ENCODE measurements at regions of chr14 and their contacts with region 1.

Region 1: DNA sequence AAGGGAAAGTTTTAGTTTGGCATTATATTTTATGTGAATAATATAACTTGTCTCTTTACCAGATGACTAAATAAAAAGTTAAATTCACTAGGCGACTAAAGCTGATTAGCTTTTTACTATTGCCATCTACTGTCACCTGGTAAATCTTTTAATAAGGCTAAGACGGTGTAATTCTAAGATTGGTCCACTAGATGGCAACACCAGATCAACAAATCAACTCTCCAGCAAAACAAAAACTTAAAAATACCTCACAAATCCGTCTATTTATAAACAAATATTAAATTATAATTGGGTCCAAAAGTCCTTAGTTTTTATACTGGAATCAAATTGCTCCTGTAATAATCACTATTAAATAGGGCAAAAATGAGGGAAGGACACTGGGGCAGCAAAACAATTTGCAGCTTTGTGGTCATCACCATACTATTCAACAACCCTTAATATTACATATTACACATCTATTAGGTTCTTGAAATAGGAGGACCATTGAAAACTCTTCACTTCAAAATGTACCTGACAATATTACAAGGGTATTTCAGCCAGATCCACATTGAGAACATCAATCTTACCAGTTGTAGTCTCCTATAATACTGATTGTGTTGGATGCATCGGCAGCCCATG is 47.9 kb downstream of the GALC start:
- DNase-seq: peak; percentile 68
- ATAC-seq: peak; percentile 88
- H3K4me3 ChIP-seq: no peak overlapping the region
- H3K27ac ChIP-seq: no peak overlapping the region
- H3K4me1 ChIP-seq: no peaks in the 10 kb centered on the region
- H3K27me3 ChIP-seq: no peaks in the 10 kb centered on the region
- CTCF ChIP-seq: peak; percentile 69
- POLR2A ChIP-seq: no peak
- RAD21 ChIP-seq: peak; percentile 64

Region 2: GRCh38 chr14:88013750-88014349 is 68.8 kb after region 1 on chr14:
- CTCF ChIA-PET with region 1: interaction called, 4 read pairs
- POLR2A ChIA-PET with region 1: no interaction called
- dilution Hi-C with region 1: no loop called
- in situ Hi-C with region 1: no loop called
- intact Hi-C with region 1: loop called (anchors 5 kb)
- DNase-seq: peak; percentile 58
- ATAC-seq: peak; percentile 94
- H3K4me3 ChIP-seq: no peak overlapping the region
- H3K27ac ChIP-seq: no peak overlapping the region
- H3K4me1 ChIP-seq: no peaks in the 10 kb centered on the region
- H3K27me3 ChIP-seq: no peaks in the 10 kb centered on the region; the same call in 1 of the 2 replicates
- CTCF ChIP-seq: peak; percentile 87
- POLR2A ChIP-seq: no peak
- RAD21 ChIP-seq: peak; percentile 78

Region 3: GRCh38 chr14:88179716-88180115 is 234.6 kb after region 1 on chr14:
- CTCF ChIA-PET with region 1: interaction called, 4 read pairs
- POLR2A ChIA-PET with region 1: no interaction called
- dilution Hi-C with region 1: no loop called
- in situ Hi-C with region 1: loop called (anchors 10 kb)
- intact Hi-C with region 1: no loop called
- DNase-seq: no peak
- ATAC-seq: no peak
- H3K4me3 ChIP-seq: no peak overlapping the region
- H3K27ac ChIP-seq: no peak overlapping the region
- H3K4me1 ChIP-seq: no peaks in the 10 kb centered on the region
- H3K27me3 ChIP-seq: no peaks in the 10 kb centered on the region
- CTCF ChIP-seq: no peak
- POLR2A ChIP-seq: no peak
- RAD21 ChIP-seq: no peak

Region 4: DNA sequence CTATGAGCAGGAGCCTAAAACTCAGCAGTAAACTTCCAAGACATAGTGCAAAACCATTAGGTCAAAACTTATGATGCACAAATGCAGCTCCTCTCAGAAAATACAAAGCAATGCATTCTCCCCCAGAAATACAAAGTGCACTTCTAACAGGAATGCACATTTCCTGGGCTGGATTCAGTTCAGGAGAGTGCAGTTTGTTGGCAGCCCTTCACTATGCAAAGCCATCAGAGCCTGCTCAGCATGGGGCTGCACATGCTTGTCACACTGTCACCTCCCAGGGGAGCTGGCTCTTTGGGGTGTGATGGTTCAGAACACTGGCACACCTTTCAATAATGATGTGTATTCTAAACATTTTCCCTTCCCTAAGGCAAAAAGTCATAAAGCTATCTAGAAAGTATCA is 267.6 kb after region 1 on chr14:
- CTCF ChIA-PET with region 1: no interaction called
- POLR2A ChIA-PET with region 1: no interaction called
- dilution Hi-C with region 1: no loop called
- in situ Hi-C with region 1: no loop called
- intact Hi-C with region 1: no loop called
- DNase-seq: no peak
- ATAC-seq: no peak
- H3K4me3 ChIP-seq: no peak overlapping the region
- H3K27ac ChIP-seq: no peak overlapping the region
- H3K4me1 ChIP-seq: no peaks in the 10 kb centered on the region
- H3K27me3 ChIP-seq: no peaks in the 10 kb centered on the region
- CTCF ChIP-seq: no peak
- POLR2A ChIP-seq: no peak
- RAD21 ChIP-seq: no peak

Region 5: DNA sequence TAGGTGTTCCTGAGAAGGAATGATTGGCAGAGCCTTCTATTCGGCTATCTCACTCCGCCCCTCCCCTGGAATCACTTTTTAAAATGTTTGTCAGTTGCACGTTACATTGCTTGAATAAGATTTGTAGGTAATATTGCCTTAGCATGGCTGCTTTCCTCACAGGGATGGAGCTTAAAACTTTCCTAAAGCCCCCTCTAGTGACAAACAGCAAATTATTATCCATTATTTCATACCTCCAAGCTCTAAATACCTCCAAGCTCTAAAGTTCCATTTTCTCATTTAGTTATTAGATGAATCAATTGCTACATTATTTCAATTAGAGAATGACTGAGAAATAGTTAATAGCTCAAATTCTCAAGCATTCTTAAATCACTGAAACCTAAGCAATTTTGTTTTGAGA is 435.3 kb after region 1 on chr14:
- CTCF ChIA-PET with region 1: no interaction called
- POLR2A ChIA-PET with region 1: no interaction called
- dilution Hi-C with region 1: no loop called
- in situ Hi-C with region 1: loop called (anchors 10 kb)
- intact Hi-C with region 1: loop called (anchors 2 kb)
- DNase-seq: peak; percentile 5
- ATAC-seq: peak; percentile 25; the same call in 1 of the 2 replicates
- H3K4me3 ChIP-seq: no peak overlapping the region
- H3K27ac ChIP-seq: no peak overlapping the region
- H3K4me1 ChIP-seq: no peaks in the 10 kb centered on the region
- H3K27me3 ChIP-seq: no peaks in the 10 kb centered on the region; the same call in 1 of the 2 replicates
- CTCF ChIP-seq: peak; percentile 32; the same call in 1 of the 2 replicates
- POLR2A ChIP-seq: no peak
- RAD21 ChIP-seq: peak; percentile 15; the same call in 1 of the 2 replicates

Region 6: DNA sequence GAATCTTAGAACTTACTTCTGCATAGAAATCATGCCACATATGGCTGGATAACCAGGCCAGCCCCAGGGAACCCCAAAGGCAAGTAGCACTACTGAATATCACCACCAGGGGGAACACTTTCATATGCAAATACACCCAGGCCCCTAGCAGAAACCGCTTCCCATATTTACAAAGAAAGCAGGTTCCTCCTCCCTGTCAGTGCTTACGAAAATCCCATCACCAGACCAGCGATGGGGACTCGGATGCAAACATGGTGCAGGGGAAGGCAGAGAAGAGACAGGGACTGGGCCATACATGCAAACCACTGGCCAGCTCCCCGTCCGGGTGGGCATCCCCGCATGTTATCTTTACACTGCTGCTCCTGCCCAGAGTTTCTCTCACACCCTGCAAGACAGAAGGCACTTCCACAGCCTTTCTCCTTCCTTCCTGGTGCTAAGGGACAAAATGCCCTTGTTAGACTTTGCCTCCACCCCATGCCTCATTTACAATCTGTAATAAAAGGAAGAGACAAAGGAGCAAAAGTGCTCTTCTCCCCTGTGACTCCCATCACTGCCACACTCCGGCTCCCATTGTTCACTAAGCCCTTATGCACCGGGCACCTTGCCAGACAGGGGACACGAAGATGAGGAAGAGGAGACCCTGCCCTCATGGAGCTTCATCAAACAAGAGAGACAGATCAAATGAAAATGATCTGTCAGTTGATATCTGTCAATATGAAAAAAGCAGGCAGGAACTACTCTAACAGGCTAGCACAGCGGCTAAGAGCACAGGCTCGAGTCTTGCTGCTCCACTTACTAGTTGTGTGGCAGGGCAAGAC is 547.4 kb after region 1 on chr14:
- CTCF ChIA-PET with region 1: no interaction called
- POLR2A ChIA-PET with region 1: no interaction called
- dilution Hi-C with region 1: no loop called
- in situ Hi-C with region 1: no loop called
- intact Hi-C with region 1: loop called (anchors 10 kb)
- DNase-seq: peak; percentile 81
- ATAC-seq: peak; percentile 96
- H3K4me3 ChIP-seq: no peak overlapping the region
- H3K27ac ChIP-seq: no peak overlapping the region
- H3K4me1 ChIP-seq: 0 out of 2 replicates have a peak, but pooled peaks cover 2% of the 10 kb centered on the region
- H3K27me3 ChIP-seq: no peaks in the 10 kb centered on the region
- CTCF ChIP-seq: peak; percentile 79
- POLR2A ChIP-seq: no peak
- RAD21 ChIP-seq: peak; percentile 66

Measured in IMR-90 (cell line).